ENCODE measurements at regions of chr1 and their contacts with region 1.

Region 1: DNA sequence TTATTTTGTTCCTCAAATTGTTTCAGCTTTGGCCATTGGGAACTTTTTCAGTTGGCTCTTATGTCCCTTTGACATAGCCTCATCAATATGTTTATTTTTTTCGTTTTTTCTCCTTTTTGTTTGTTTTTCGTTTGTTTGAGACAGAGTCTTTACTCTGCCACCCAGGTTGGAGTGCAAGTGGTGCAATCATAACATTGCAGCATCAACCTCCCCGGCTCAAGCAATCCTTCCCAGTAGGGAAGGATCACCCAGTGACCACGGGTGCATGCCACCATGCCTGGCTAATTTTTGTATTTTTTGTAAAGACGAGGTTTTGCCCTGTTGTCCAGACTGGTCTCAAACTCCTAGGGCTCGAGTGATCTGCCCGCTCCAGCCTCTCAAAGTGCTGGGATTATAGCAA is 8.1 kb downstream of the POLR3GL start:
- DNase-seq: no peak
- H3K4me3 ChIP-seq: no peak overlapping the region
- H3K27ac ChIP-seq: no peak overlapping the region
- H3K4me1 ChIP-seq: peaks cover 6% of the 10 kb centered on the region
- H3K27me3 ChIP-seq: no peaks in the 10 kb centered on the region
- CTCF ChIP-seq: no peak

Region 2: DNA sequence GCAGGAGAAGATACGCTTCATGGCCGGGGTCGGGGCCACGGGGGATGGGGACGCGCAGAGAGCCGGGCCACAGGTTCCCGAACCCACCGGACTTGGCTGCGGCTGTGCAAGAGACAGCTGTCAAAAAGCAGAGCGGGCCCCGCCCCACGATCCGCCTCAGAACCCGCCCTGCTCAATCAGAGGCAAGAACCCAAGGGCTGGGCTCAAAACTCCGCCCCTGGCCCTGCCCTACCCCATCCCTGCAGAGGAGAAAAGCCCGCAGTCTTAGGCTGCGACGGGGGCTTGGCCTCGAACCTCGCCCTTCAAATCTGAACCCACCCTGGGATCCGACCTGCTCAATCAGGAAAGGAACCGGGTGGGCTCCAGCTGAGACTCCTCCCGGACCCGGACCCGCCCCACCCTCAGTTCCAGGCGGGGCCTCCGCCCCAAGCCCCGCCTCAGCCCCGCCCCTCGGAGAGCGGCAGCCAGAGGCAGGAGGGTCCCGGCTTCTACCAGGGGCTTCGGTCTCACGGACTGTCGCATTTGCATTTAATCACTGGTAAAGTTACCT is 86.8 kb before region 1 on chr1 and contains the start of gene ANKRD35:
- CTCF ChIA-PET with region 1: no interaction called
- dilution Hi-C with region 1: no loop called
- in situ Hi-C with region 1: no loop called
- intact Hi-C with region 1: no loop called
- DNase-seq: peak; percentile 64
- H3K4me3 ChIP-seq: peak within 1 kb of the TSS; percentile 59 to 62 (median 62)
- H3K27ac ChIP-seq: no peak within 1 kb of the TSS
- H3K4me1 ChIP-seq: peaks cover 15% of the 10 kb centered on the region
- H3K27me3 ChIP-seq: no peaks in the 10 kb centered on the region
- CTCF ChIP-seq: no peak
- total RNA-seq, gene ANKRD35: 0.33 to 0.66 TPM

Region 3: DNA sequence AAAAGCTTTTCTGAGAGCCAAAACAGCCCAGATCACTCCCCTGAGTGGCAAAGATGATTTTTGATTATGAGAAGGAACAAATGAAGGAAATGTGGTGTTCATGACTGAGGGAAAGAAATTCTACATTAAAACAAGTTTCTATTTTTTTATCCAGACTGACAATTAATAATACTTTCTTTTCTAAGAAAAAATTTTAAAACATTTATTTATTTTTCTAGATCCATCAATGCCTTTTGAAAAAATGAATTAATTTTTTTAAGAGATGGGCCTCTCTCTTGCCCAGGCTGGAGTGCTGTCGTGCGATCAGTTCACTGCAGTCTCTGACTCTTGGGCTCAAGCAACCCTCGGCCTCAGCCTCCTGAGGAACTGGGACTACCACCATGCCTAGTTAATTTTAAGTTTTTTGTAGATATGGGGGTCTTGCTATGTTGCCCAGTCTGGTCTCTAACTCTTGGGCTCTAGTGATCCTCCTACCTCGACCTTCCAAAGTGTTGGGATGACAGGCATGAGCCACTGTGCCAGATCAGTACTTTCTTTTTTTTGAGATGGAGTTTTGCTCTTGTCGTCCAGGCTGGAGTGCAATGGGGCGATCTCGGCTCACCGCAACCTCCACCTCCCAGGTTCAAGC is 35.0 kb after region 1 on chr1:
- CTCF ChIA-PET with region 1: no interaction called
- dilution Hi-C with region 1: no loop called
- in situ Hi-C with region 1: loop called (anchors 5 kb)
- intact Hi-C with region 1: loop called (anchors 1 kb)
- DNase-seq: no peak
- H3K4me3 ChIP-seq: no peak overlapping the region
- H3K27ac ChIP-seq: no peak overlapping the region
- H3K4me1 ChIP-seq: peaks cover 3% of the 10 kb centered on the region
- H3K27me3 ChIP-seq: no peaks in the 10 kb centered on the region
- CTCF ChIP-seq: no peak

Region 4: GRCh38 chr1:146049436-146049835 is 76.9 kb after region 1 on chr1:
- CTCF ChIA-PET with region 1: no interaction called
- dilution Hi-C with region 1: no loop called
- in situ Hi-C with region 1: no loop called
- intact Hi-C with region 1: no loop called
- DNase-seq: no peak
- H3K4me3 ChIP-seq: no peak overlapping the region
- H3K27ac ChIP-seq: no peak overlapping the region
- H3K4me1 ChIP-seq: no peaks in the 10 kb centered on the region
- H3K27me3 ChIP-seq: no peaks in the 10 kb centered on the region
- CTCF ChIP-seq: no peak